IMR-90 (cell line): ENCODE measurements at regions of chr2 and their contacts with region 1.

Region 1: DNA sequence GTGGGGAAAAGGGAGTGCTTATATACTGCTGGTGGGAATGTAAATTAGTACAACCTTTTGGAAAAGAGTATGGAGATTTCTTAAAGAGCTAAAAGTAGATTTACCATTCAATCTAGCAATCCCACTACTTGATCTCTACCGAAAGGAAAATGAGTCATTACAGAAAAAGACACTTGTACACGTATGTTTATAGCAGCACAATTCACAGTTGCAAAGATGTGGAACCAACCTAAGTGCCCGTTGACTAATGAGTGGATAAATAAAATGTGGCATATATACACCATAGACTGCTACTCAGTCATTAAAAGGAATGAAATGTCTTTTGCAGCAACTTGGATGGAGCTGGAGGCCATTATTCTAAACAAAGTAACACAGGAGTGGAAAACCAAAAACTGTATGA is 29.5 kb downstream of the FLACC1 start:
- DNase-seq: no peak
- ATAC-seq: no peak
- H3K4me3 ChIP-seq: no peak overlapping the region
- H3K27ac ChIP-seq: no peak overlapping the region
- H3K4me1 ChIP-seq: no peaks in the 10 kb centered on the region
- H3K27me3 ChIP-seq: no peaks in the 10 kb centered on the region
- CTCF ChIP-seq: no peak
- POLR2A ChIP-seq: no peak
- RAD21 ChIP-seq: no peak

Region 2: DNA sequence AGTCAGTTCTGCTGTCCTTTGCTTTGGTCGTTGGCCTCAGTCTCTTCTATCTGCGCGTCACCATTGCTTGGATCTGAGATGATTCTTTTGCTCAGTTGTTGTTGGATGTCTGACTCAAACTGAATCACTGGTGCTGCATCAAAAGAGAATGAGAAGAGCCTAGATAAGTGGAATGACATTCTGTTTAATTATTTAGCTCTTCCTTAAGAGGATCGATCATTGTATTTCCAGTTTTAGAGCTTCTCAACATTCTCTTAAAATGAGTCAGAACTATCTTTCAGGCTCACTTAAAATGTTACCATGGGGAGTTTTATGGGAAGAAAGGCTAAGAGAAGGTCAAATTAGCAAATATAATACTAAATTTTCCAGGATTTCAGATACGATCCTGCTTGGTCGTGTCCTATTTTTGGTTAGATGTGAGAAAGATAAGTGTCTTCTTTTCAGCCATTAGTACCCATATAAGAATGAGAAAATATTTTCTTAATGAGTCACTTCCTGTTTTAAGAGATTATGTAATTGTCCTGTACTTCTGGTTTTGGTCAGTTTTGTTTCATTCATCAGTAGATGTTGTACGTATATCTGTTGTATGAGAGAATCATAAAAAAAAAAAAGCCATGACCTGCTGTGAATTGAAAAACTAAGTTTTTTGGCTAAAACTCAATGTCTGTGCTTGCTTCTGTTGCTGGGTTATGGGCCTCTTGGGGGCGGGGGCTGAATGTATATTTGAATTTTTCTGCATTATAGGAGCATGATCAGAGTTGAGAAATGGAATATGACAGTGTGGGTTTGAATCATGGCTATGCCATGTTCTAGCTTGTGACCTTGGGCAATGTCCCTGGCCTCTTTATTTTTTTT is 176.3 kb before region 1 on chr2:
- CTCF ChIA-PET with region 1: no interaction called
- POLR2A ChIA-PET with region 1: no interaction called
- dilution Hi-C with region 1: no loop called
- in situ Hi-C with region 1: no loop called
- intact Hi-C with region 1: no loop called
- DNase-seq: peak; percentile 93
- ATAC-seq: peak; percentile 63
- H3K4me3 ChIP-seq: no peak overlapping the region
- H3K27ac ChIP-seq: peak overlapping the region; percentile 87
- H3K4me1 ChIP-seq: peaks cover 19% of the 10 kb centered on the region
- H3K27me3 ChIP-seq: no peaks in the 10 kb centered on the region
- CTCF ChIP-seq: no peak
- POLR2A ChIP-seq: no peak; the same call in 1 of the 2 replicates
- RAD21 ChIP-seq: no peak

Region 3: DNA sequence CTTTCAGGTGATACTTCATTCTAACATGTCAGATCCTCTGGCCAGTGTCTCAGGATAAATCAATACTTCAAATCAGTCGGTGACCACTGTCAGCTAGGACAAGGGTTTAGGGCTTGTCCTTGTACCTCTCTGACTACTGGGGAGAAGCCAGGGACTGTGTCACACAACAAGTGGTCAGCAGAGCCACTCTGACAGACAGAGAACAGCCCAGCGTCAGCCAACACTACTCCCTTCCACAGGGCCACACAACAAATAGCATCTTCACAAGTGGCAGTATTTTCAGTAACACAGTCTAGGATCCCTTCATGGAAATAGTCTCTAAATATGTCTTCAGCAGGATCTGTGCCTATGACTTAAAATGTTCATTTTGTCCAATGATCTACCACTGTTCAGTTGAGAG is 15.2 kb after region 1 on chr2:
- CTCF ChIA-PET with region 1: no interaction called
- POLR2A ChIA-PET with region 1: interaction called, 14 read pairs
- dilution Hi-C with region 1: no loop called
- in situ Hi-C with region 1: no loop called
- intact Hi-C with region 1: no loop called
- DNase-seq: no peak
- ATAC-seq: no peak
- H3K4me3 ChIP-seq: no peak overlapping the region
- H3K27ac ChIP-seq: no peak overlapping the region
- H3K4me1 ChIP-seq: no peaks in the 10 kb centered on the region
- H3K27me3 ChIP-seq: no peaks in the 10 kb centered on the region
- CTCF ChIP-seq: no peak
- POLR2A ChIP-seq: no peak
- RAD21 ChIP-seq: no peak